ENCODE measurements at regions of chr10 and their contacts with region 1.

Region 1: GRCh38 chr10:1488969-1489548 is 248.3 kb downstream of the ADARB2 start:
- DNase-seq: peak; percentile 87
- ATAC-seq: peak; percentile 87
- H3K4me3 ChIP-seq: peak overlapping the region in 2 of 5 experiments; percentile 10 to 38
- H3K4me3 Mint-ChIP-seq: peak overlapping the region; percentile 78
- H3K27ac ChIP-seq: peak overlapping the region; percentile 40 to 73
- H3K27ac Mint-ChIP-seq: peak overlapping the region; percentile 90
- H3K4me1 ChIP-seq: peaks cover 64 to 70% of the 10 kb centered on the region in 2 donors
- H3K4me1 Mint-ChIP-seq: peaks cover 63% of the 10 kb centered on the region
- H3K27me3 ChIP-seq: no peaks in the 10 kb centered on the region
- H3K27me3 Mint-ChIP-seq: no peaks in the 10 kb centered on the region
- CTCF ChIP-seq: peak; percentile 29

Region 2: DNA sequence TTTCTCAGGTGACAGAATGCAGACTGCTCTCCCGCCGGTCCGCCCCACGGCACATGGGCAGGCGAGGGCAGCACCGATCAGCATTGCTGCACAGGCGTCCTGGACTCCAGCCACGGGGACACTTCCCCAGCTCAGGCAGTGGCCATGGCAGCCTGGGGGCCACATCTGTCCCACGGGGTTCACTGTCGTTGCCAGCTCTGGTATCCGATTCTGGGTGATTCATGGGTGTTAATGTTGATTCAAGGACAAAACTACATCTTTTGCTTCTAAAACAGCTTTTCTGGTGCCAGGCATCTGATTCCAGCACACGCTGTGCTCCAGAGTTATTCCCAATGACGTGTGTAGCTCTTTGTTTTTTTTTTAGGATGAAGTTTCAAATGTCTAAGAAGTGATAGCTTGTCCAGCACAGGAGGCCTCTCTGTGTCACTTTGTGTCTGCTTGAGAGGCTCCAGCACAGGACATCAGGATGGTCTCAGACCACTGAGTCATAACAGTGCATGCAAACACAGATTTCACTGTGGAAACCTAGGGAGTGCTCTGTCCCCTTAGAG is 214.9 kb before region 1 on chr10:
- CTCF ChIA-PET with region 1: no interaction called
- POLR2A ChIA-PET with region 1: no interaction called
- intact Hi-C with region 1: no loop called
- DNase-seq: no peak
- ATAC-seq: no peak
- H3K4me3 ChIP-seq: no peak overlapping the region
- H3K4me3 Mint-ChIP-seq: no peak overlapping the region
- H3K27ac ChIP-seq: no peak overlapping the region
- H3K27ac Mint-ChIP-seq: no peak overlapping the region
- H3K4me1 ChIP-seq: no peaks in the 10 kb centered on the region
- H3K4me1 Mint-ChIP-seq: no peaks in the 10 kb centered on the region
- H3K27me3 ChIP-seq: no peaks in the 10 kb centered on the region
- H3K27me3 Mint-ChIP-seq: no peaks in the 10 kb centered on the region
- CTCF ChIP-seq: no peak

Region 3: GRCh38 chr10:1425879-1426278 is 63.2 kb before region 1 on chr10:
- CTCF ChIA-PET with region 1: interaction called, 5 read pairs
- POLR2A ChIA-PET with region 1: interaction called, 5 read pairs
- intact Hi-C with region 1: loop called (anchors 1 kb)
- DNase-seq: peak; percentile 63
- ATAC-seq: peak; percentile 56
- H3K4me3 ChIP-seq: no peak overlapping the region
- H3K4me3 Mint-ChIP-seq: peak overlapping the region; percentile 77
- H3K27ac ChIP-seq: peak overlapping the region; percentile 36 to 65
- H3K27ac Mint-ChIP-seq: peak overlapping the region; percentile 89
- H3K4me1 ChIP-seq: peaks cover 51 to 69% of the 10 kb centered on the region in 2 donors
- H3K4me1 Mint-ChIP-seq: peaks cover 61% of the 10 kb centered on the region
- H3K27me3 ChIP-seq: no peaks in the 10 kb centered on the region
- H3K27me3 Mint-ChIP-seq: no peaks in the 10 kb centered on the region
- CTCF ChIP-seq: no peak

Region 4: DNA sequence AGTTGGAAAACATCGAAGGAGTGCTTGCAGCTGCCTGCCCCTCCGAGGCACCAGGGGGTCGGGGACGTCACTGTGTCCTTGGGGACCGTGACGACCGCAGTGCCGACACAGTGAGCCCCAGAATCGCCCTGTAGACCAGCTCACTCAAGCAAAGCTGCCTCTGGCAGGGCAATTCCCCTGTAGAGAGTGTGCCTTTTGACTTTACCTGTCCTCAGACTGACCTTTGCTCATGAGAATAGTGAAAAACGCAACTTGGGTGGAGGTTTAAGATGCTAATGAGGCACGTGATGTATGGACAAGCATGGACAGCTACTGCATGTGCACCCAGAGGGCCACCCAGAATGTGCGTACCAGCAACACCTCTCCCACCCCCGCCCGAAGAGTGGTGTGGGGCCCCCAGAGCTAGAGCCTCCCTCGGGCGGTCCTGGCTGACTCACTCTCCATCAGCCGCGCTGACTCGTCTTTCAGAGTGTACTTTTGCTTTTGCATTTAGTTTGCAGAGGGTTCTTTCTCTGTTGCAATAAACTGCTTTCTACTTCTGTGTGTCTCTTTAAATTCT is 23.6 kb before region 1 on chr10:
- CTCF ChIA-PET with region 1: interaction called, 6 read pairs
- POLR2A ChIA-PET with region 1: no interaction called
- intact Hi-C with region 1: loop called (anchors 1 kb)
- DNase-seq: peak; percentile 57
- ATAC-seq: peak; percentile 80
- H3K4me3 ChIP-seq: peak overlapping the region in 2 of 5 experiments; percentile 11 to 38
- H3K4me3 Mint-ChIP-seq: peak overlapping the region; percentile 71
- H3K27ac ChIP-seq: no peak overlapping the region
- H3K27ac Mint-ChIP-seq: peak overlapping the region; percentile 72
- H3K4me1 ChIP-seq: peaks cover 25 to 37% of the 10 kb centered on the region in 2 donors
- H3K4me1 Mint-ChIP-seq: peaks cover 48% of the 10 kb centered on the region
- H3K27me3 ChIP-seq: peaks cover 0 to 5% (median 0%) of the 10 kb centered on the region in 4 experiments
- H3K27me3 Mint-ChIP-seq: peaks cover 21% of the 10 kb centered on the region
- CTCF ChIP-seq: no peak

Region 5: GRCh38 chr10:1516492-1517165 is 27.6 kb after region 1 on chr10:
- CTCF ChIA-PET with region 1: no interaction called
- POLR2A ChIA-PET with region 1: no interaction called
- intact Hi-C with region 1: no loop called
- DNase-seq: no peak
- ATAC-seq: no peak
- H3K4me3 ChIP-seq: no peak overlapping the region
- H3K4me3 Mint-ChIP-seq: no peak overlapping the region
- H3K27ac ChIP-seq: no peak overlapping the region
- H3K27ac Mint-ChIP-seq: no peak overlapping the region
- H3K4me1 ChIP-seq: no peaks in the 10 kb centered on the region
- H3K4me1 Mint-ChIP-seq: peaks cover 7% of the 10 kb centered on the region
- H3K27me3 ChIP-seq: peaks cover 0 to 4% (median 0%) of the 10 kb centered on the region in 4 experiments
- H3K27me3 Mint-ChIP-seq: peaks cover 11% of the 10 kb centered on the region
- CTCF ChIP-seq: no peak

Region 6: GRCh38 chr10:1661859-1662437 is 172.9 kb after region 1 on chr10:
- CTCF ChIA-PET with region 1: no interaction called
- POLR2A ChIA-PET with region 1: no interaction called
- intact Hi-C with region 1: loop called (anchors 1 kb)
- DNase-seq: peak; percentile 87
- ATAC-seq: peak; percentile 89
- H3K4me3 ChIP-seq: peak overlapping the region in 2 of 5 experiments; percentile 1 to 20
- H3K4me3 Mint-ChIP-seq: peak overlapping the region; percentile 79
- H3K27ac ChIP-seq: peak overlapping the region; percentile 68 to 71
- H3K27ac Mint-ChIP-seq: peak overlapping the region; percentile 75
- H3K4me1 ChIP-seq: peaks cover 31 to 32% of the 10 kb centered on the region in 2 donors
- H3K4me1 Mint-ChIP-seq: peaks cover 50% of the 10 kb centered on the region
- H3K27me3 ChIP-seq: peaks cover 0 to 5% (median 2%) of the 10 kb centered on the region in 4 experiments
- H3K27me3 Mint-ChIP-seq: peaks cover 19% of the 10 kb centered on the region
- CTCF ChIP-seq: no peak